Activated CD4-positive, alpha-beta memory T cell treated with anti-CD3 and anti-CD28 coated beads for 36 hours (primary cell): ENCODE measurements at regions of chr17 and their contacts with region 1.

Region 1: DNA sequence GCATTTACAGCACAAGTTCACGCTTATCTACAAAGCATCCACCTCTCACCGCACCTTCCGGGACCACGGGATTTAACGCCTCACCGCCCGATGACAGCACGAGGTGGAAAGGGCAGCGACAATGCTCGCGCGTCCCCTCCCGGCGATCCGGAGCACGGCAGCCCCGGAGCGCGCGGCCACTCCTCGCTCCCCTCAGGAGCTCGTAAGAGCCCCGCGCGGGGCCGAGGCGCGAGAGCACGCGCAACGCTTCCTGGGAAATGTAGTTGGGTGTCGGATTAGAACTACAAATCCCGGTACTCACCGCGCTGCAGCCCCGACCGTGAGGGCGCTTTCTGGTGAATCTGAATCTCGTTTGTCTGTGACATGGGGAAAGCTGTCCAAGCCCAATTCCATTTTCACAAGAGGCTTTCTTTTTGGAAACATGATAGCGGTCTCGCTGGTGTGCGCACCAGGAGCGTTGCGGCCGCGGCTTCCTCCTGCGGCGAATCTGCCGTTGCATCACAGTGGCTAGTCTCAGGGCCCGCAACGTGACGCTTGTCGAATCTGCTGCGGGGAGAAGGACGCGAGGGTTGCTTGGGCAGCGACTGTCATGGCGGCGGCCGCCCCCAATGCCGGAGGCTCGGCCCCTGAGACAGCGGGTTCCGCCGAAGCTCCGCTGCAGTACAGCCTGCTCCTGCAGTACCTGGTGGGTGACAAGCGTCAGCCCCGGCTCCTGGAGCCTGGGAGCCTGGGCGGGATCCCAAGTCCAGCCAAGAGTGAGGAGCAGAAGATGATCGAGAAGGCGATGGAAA is at the start of gene TIMM22:
- DNase-seq: peak; percentile 96
- H3K4me3 Mint-ChIP-seq: peak within 1 kb of the TSS; percentile 92
- H3K27ac Mint-ChIP-seq: peak within 1 kb of the TSS; percentile 97
- H3K4me1 Mint-ChIP-seq: peaks cover 22% of the 10 kb centered on the region
- H3K27me3 Mint-ChIP-seq: no peaks in the 10 kb centered on the region
- total RNA-seq, gene TIMM22: 8.0 to 9.6 TPM

Region 2: GRCh38 chr17:716238-716637 is 280.5 kb before region 1 on chr17:
- CTCF ChIA-PET with region 1: interaction called, 11 read pairs
- POLR2A ChIA-PET with region 1: no interaction called
- intact Hi-C with region 1: no loop called
- DNase-seq: no peak
- H3K4me3 Mint-ChIP-seq: no peak overlapping the region
- H3K27ac Mint-ChIP-seq: no peak overlapping the region
- H3K4me1 Mint-ChIP-seq: peaks cover 23% of the 10 kb centered on the region
- H3K27me3 Mint-ChIP-seq: no peaks in the 10 kb centered on the region

Region 3: DNA sequence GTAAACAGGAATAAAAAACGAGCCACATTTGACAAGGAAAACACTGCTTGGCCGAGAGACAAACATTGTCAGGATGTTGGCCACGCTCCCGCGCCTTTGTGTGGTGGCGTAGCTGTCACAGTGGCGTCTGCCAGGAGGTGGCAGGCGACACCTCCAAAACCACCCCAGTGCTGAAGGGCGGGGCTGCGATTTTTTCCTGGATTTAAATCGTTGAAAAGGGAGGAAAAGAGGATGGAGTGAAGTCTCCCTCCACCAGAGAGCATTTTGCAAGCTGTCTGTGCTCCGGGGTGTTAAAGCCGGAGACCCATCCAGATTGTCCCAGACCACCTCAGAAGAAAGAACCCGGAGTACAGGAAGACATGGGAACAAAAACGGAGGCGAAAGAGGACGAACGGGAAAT is 201.9 kb before region 1 on chr17:
- CTCF ChIA-PET with region 1: interaction called, 17 read pairs
- POLR2A ChIA-PET with region 1: no interaction called
- intact Hi-C with region 1: no loop called
- DNase-seq: peak; percentile 61
- H3K4me3 Mint-ChIP-seq: no peak overlapping the region
- H3K27ac Mint-ChIP-seq: no peak overlapping the region
- H3K4me1 Mint-ChIP-seq: peaks cover 2% of the 10 kb centered on the region
- H3K27me3 Mint-ChIP-seq: no peaks in the 10 kb centered on the region

Region 4: GRCh38 chr17:979538-980405 is 17.0 kb before region 1 on chr17 and contains the start of gene NXN:
- CTCF ChIA-PET with region 1: interaction called, 45 read pairs
- POLR2A ChIA-PET with region 1: interaction called, 3 read pairs
- intact Hi-C with region 1: loop called (anchors 1 kb)
- DNase-seq: peak; percentile 90
- H3K4me3 Mint-ChIP-seq: peak within 1 kb of the TSS; percentile 63
- H3K27ac Mint-ChIP-seq: no peak within 1 kb of the TSS
- H3K4me1 Mint-ChIP-seq: peaks cover 11% of the 10 kb centered on the region
- H3K27me3 Mint-ChIP-seq: peaks cover 26% of the 10 kb centered on the region
- total RNA-seq, gene NXN: 0.31 to 0.33 TPM